Mammary epithelial cell (primary cell): ENCODE measurements at regions of chr11 and their contacts with region 1.

Region 1: GRCh38 chr11:76030286-76030685 is 176.0 kb downstream of the WNT11 start:
- DNase-seq: peak; percentile 8
- H3K4me3 ChIP-seq: no peak overlapping the region
- H3K27ac ChIP-seq: no peak overlapping the region
- H3K4me1 ChIP-seq: no peaks in the 10 kb centered on the region
- H3K27me3 ChIP-seq: no peaks in the 10 kb centered on the region
- CTCF ChIP-seq: no peak

Region 2: GRCh38 chr11:75667831-75668450 is 362.3 kb before region 1 on chr11:
- CTCF ChIA-PET with region 1: no interaction called
- dilution Hi-C with region 1: no loop called
- in situ Hi-C with region 1: no loop called
- intact Hi-C with region 1: no loop called
- DNase-seq: peak; percentile 8
- H3K4me3 ChIP-seq: peak overlapping the region; percentile 25 to 53 (median 44)
- H3K27ac ChIP-seq: no peak overlapping the region
- H3K4me1 ChIP-seq: peaks cover 16% of the 10 kb centered on the region
- H3K27me3 ChIP-seq: peaks cover 6% of the 10 kb centered on the region
- CTCF ChIP-seq: no peak

Region 3: DNA sequence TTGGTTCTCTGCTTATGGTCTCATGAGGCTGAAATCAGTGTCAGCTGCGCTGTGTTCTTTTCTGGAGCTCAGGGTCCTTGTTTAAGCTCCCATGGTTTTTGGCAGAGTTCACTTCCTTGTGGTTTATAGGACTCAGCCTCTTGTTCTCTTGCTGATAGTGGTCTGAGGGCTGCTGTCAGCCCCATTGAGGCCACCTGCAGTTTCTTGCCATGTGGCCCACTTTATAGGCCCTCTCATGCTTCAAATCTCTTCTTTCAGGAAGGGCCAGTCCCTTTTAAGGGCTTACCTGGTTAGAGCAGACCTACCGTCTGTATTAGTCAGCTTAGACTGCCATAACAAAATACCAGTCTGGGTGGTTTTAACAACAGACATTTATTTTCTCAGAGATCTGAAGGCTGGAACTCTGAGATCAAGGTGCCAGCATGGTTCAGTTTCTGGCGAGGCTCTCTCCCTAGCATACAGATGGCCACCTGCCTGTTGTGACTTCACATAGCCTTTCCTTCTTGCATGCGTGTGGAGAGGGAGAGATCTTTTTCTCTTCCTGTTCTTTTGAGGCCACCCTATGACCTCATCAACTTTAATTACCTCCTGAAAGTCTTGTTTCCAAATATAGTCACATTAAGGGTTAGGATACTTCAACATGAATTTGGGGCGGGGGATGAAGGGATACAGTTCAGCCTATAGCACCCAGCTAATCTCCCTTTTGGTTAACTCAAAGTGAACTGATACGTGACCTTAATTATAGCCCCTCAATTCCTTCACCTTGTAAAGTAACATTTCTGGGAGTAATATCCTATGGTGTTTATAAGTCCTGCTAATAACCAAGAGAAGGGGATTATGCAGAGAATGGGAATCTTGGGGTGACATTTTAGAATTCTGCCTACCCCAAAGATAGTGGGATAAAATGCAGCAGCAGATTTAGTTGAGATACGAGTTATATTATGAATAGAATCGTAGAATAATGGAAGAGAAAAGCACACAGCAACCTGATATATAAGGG is 83.5 kb before region 1 on chr11:
- CTCF ChIA-PET with region 1: no interaction called
- dilution Hi-C with region 1: no loop called
- in situ Hi-C with region 1: no loop called
- intact Hi-C with region 1: loop called (anchors 10 kb)
- DNase-seq: peak; percentile 28
- H3K4me3 ChIP-seq: no peak overlapping the region
- H3K27ac ChIP-seq: no peak overlapping the region
- H3K4me1 ChIP-seq: no peaks in the 10 kb centered on the region
- H3K27me3 ChIP-seq: no peaks in the 10 kb centered on the region
- CTCF ChIP-seq: no peak

Region 4: GRCh38 chr11:75996523-75997442 is 33.5 kb before region 1 on chr11:
- CTCF ChIA-PET with region 1: no interaction called
- dilution Hi-C with region 1: loop called (anchors 5 kb)
- in situ Hi-C with region 1: no loop called
- intact Hi-C with region 1: no loop called
- DNase-seq: no peak
- H3K4me3 ChIP-seq: no peak overlapping the region
- H3K27ac ChIP-seq: no peak overlapping the region
- H3K4me1 ChIP-seq: no peaks in the 10 kb centered on the region
- H3K27me3 ChIP-seq: no peaks in the 10 kb centered on the region
- CTCF ChIP-seq: no peak

Region 5: DNA sequence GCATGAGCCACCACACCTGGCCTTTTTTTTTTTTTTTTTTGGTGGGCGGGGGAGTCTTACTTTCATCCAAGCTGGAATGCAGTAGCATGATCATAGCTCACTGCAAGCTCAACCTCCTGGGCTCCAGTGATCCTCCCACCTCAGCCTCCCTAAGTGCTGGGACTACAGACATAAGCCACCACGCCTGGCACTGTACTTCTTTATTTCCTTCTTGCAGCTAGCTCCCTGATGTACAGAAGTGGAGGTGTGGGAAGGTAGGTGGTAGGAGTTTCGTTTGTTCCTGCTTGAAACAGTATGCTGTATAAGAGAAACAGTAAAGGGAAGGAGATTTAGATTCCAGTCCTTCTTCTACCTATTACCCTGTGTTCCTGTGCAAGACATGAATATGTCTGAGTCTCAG is 104.0 kb after region 1 on chr11:
- CTCF ChIA-PET with region 1: interaction called, 35 read pairs
- dilution Hi-C with region 1: no loop called
- in situ Hi-C with region 1: no loop called
- intact Hi-C with region 1: no loop called
- DNase-seq: no peak
- H3K4me3 ChIP-seq: no peak overlapping the region
- H3K27ac ChIP-seq: no peak overlapping the region
- H3K4me1 ChIP-seq: no peaks in the 10 kb centered on the region
- H3K27me3 ChIP-seq: no peaks in the 10 kb centered on the region
- CTCF ChIP-seq: no peak

Region 6: DNA sequence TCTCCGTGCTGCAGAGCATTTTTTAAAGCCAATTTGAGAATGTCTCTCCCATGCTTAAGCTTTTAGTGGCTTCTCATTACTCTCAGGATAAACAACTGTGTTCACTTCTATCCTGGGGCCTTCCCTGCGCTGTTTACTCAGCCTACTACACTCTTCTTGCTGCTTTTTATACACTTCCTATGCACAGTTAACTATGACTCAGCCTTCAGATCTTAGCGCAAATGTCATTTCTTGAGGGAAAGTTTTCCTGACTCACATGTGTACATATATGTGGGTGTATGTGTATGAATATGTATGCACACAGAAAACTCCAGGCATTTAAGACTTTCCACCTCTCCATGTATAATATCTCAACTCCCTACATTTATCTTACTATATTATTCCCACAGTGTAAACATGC is 340.9 kb after region 1 on chr11:
- CTCF ChIA-PET with region 1: no interaction called
- dilution Hi-C with region 1: no loop called
- in situ Hi-C with region 1: no loop called
- intact Hi-C with region 1: no loop called
- DNase-seq: peak; percentile 71
- H3K4me3 ChIP-seq: no peak overlapping the region
- H3K27ac ChIP-seq: no peak overlapping the region
- H3K4me1 ChIP-seq: peaks cover 13% of the 10 kb centered on the region
- H3K27me3 ChIP-seq: no peaks in the 10 kb centered on the region
- CTCF ChIP-seq: no peak